Ascending aorta (tissue), 2 donors: ENCODE measurements at regions of chr7 and their contacts with region 1.

Region 1: DNA sequence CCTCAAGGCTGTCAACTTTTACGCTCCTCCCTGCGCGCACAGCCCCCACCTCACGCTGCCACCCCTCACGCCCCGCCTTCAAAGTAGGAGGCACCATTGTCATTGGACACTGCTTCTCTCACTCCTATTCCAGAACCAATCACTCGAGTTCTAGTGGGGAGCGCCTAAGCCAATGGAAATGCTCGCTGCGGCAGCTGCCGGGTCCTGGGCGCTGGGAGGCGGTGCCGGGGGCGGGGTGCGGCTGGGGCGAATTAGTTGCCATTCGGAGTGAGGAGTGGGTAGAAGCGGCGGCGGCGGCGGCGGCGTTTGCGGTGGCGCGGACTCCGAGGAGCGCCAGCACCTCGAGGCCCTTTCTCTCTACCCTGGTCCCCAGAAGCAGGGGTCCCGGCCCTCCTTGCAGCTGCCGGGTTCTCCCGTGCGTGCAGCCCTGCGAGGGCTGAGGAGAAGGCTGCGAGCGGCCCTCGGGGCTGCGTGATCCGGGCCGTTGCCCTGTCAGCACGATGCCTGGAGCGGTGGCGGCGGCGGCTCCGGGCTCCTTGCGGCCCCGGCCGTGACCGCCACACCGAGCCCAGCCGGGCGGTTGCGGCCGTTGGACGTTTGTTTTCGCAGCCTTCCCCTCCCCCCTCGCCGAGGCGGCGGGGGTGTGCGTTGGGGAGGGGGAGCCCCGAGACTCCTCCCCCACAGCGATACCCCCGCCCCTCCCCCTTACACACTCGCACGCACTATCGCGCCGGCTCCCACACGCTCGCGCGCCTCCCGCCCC is at the start of gene GLCCI1:
- DNase-seq: peak; percentile 94 to 98
- H3K4me3 ChIP-seq: peak within 1 kb of the TSS; percentile 95 to 99
- H3K27ac ChIP-seq: peak within 1 kb of the TSS; percentile 92 to 99
- H3K4me1 ChIP-seq: peaks cover 0 to 9% of the 10 kb centered on the region in 2 donors
- H3K27me3 ChIP-seq: no peaks in the 10 kb centered on the region
- CTCF ChIP-seq: no peak
- total RNA-seq, gene GLCCI1: 0.21 TPM

Region 2: DNA sequence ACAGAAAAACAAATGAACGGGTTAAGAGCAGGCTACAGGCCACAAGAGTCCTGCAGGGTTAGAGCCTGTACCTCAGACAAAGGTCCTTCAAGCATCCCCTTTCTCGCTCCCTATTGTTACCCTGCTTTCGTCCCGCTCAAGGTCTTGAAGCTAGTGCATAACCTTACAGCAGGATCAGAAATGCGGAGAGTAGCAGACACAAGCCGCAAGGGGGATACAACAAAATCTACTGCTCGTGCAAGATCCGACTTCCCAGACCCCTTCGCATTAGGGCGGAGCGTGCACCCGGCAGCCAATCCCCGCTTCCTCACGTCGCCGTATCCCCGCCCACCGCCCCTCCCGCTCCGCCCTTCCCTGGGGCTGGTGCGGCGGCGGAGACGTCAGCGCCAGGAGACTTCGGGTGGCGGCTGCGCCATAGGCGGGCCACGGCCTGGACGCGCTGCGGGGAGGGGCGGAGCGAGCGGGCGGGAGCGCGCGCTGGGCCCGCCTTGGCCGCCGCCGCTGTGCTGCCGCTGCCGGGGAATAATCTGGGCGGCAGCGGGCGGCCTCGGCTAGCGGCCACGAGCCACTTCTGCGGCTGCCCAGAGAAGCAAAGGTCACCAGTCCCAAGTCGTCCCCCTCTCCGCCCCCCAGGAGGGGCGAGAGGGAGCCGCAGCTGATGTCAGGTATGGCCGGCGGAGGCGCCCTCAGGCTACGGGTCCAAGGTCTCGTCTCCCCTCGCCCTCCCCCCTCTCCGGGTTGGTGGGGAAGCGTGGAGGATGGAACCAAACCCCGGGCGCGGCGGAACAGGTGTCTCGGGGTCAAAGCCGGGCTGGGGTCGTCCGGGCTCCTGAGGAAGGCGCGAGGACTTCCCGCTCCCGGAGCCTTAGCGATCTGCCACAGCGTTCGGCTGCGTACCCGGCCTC is 786.3 kb before region 1 on chr7 and contains the start of gene C1GALT1:
- intact Hi-C with region 1: loop called (anchors 2 kb)
- DNase-seq: peak; percentile 90 to 98
- H3K4me3 ChIP-seq: peak within 1 kb of the TSS; percentile 87 to 93
- H3K27ac ChIP-seq: peak within 1 kb of the TSS; percentile 89 to 94
- H3K4me1 ChIP-seq: peaks cover 0 to 7% of the 10 kb centered on the region in 2 donors
- H3K27me3 ChIP-seq: no peaks in the 10 kb centered on the region
- CTCF ChIP-seq: peak in 2 of 3 experiments; percentile 26 to 44
- total RNA-seq, gene C1GALT1: 11.0 TPM

Region 3: DNA sequence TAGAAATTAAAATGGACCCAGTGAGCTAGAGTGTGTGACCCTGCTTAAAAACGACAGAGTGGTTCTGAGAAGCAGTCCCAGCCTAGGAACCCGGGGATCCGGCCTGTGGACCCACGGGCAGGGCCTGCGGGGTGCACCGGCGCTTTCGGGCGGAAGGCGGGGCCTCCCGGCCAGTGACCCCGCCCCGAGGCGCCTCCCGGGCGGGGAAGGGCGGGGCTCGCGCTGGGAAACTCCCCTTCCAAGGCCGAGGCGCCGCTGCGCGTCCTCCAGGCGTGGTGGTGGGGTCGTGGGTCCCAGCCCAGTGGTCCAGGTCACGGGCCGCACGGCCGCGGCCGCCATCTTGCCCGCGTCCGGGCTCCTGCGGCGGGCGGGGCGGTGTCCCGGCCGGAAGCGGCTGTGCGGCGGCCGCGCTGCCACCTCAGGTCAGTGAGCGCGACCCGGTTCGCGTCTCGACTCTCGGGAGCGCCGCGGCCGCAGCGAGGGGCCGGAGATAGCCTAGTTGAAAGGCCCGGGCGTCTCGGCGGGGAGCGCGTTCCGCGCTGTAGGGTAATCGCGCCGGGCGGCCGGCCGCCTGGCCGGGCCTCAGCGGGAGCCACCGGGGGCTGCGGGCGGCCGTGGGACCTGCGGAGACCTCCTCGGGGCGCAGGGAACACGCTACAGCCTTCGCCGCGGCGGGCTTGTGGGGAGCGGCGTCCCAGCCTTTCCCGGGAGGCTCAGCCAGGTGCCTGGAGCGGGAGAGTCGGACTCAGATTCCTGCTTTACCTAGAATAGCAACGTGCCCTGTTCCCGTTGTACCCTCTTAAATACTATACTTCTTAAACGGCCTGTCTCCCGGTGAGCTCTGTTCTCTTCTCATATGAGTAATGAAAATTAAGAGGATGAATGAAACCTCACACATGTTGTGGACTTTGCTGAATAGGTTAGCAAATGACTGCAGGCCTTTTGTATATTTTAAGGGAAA is 401.8 kb before region 1 on chr7 and contains the start of gene MIOS:
- intact Hi-C with region 1: loop called (anchors 2 kb)
- DNase-seq: peak; percentile 10 to 90
- H3K4me3 ChIP-seq: peak within 1 kb of the TSS; percentile 85 to 93
- H3K27ac ChIP-seq: peak within 1 kb of the TSS; percentile 94 to 95
- H3K4me1 ChIP-seq: peaks cover 5 to 12% of the 10 kb centered on the region in 2 donors
- H3K27me3 ChIP-seq: no peaks in the 10 kb centered on the region
- CTCF ChIP-seq: no peak
- total RNA-seq, gene MIOS: 14.6 TPM

Region 4: GRCh38 chr7:8065356-8065813 is 96.7 kb after region 1 on chr7:
- intact Hi-C with region 1: loop called (anchors 5 kb)
- DNase-seq: peak in 1 of 2 donors; percentile 64
- H3K4me3 ChIP-seq: peak overlapping the region in 1 of 2 donors; percentile 43
- H3K27ac ChIP-seq: peak overlapping the region; percentile 84 to 90
- H3K4me1 ChIP-seq: peaks cover 5 to 17% of the 10 kb centered on the region in 2 donors
- H3K27me3 ChIP-seq: no peaks in the 10 kb centered on the region
- CTCF ChIP-seq: no peak